Heart right ventricle (tissue), 16 donors: ENCODE measurements at regions of chr6 and their contacts with region 1.

Region 1: GRCh38 chr6:2971420-2972218 is at the start of gene SERPINB6:
- DNase-seq: peak; percentile 84 to 89
- ATAC-seq: peak; percentile 89 to 94 (median 92)
- H3K4me3 ChIP-seq: peak within 1 kb of the TSS; percentile 33 to 88 (median 78)
- H3K27ac ChIP-seq: peak within 1 kb of the TSS; percentile 95 to 100 (median 98)
- H3K4me1 ChIP-seq: peaks cover 0 to 41% (median 27%) of the 10 kb centered on the region in 9 donors
- H3K27me3 ChIP-seq: no peaks in the 10 kb centered on the region
- CTCF ChIP-seq: no peak
- total RNA-seq, gene SERPINB6: 163 to 261 (median 183) TPM

Region 2: DNA sequence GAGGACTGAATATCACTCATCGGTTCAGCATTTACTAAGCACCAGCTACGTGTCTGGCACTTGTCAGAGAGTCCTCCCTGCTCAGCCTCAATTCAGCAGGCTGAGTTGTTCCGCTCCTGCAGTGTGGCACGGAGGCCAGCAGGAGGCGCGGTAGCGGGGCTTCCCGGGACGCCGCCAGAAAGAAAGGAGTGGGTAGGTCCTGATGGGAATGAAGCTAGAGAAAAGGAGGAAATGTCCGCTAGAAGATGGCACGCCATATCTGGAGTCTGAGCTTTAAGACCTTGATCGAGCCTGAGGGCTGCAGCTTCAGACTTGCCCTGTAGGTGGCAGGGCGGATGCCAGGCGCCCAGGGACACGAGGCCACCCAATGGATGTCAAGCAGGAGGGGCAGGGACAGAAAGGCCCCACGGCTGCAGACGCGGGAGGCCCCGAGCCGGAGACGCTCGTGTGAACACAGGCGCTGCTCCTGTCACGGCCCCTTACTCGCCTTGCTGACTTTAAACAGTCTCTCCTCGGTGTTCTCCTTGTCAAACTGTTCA is 19.0 kb before region 1 on chr6:
- intact Hi-C with region 1: loop called in 1 of 10 experiments (anchors 1 kb)
- DNase-seq: peak; percentile 74 to 76
- ATAC-seq: peak; percentile 48 to 86 (median 74)
- H3K4me3 ChIP-seq: peak overlapping the region in 3 of 10 donors; percentile 3 to 12 (median 4)
- H3K27ac ChIP-seq: peak overlapping the region; percentile 24 to 73 (median 63)
- H3K4me1 ChIP-seq: peaks cover 7 to 57% (median 33%) of the 10 kb centered on the region in 9 donors
- H3K27me3 ChIP-seq: no peaks in the 10 kb centered on the region
- CTCF ChIP-seq: peak; percentile 90 to 99 (median 97)

Region 3: DNA sequence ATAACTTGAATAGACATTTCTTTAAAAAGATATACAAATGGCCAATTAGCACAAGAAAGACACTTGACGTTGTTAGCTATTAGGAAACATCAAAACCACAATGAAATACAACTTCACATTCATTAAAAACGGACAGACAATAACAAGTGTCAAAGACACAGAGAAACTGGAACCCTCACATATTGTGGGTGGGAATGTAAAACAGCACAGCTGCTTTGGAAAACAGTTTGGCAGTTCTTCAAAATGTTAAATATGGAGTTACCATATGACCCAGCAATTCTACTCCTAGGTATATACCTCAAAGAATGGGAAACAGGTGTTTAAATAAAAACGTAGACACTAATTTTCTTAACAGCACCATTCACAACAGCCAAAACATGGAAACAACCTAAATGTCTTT is 585.7 kb after region 1 on chr6:
- intact Hi-C with region 1: no loop called
- DNase-seq: no peak
- ATAC-seq: no peak
- H3K4me3 ChIP-seq: no peak overlapping the region
- H3K27ac ChIP-seq: no peak overlapping the region
- H3K4me1 ChIP-seq: peaks cover 0 to 9% (median 0%) of the 10 kb centered on the region in 9 donors
- H3K27me3 ChIP-seq: peaks cover 0 to 17% (median 0%) of the 10 kb centered on the region in 7 donors
- CTCF ChIP-seq: no peak